ENCODE measurements at regions of chr20 and their contacts with region 1.

Region 1: DNA sequence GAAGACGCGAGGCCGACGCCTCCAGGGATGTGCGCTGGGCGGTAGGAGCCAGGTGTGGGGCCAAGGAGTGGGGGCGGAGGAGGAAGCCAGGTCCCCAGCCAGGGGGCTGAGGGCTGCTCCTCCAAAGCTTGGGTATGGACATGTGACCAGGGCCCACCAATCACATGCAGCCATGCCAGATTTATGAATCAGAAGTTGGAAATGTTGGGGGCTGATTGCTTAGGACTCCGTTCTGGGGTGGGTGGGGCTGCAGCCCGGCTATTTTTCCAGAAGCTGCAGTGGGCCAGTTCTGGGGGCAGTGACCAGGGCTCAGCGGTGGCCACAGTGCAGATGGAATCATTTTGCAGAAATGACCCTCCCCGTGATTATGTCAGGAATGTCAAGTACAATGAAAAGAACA is 96.0 kb downstream of the CEBPB start:
- DNase-seq: peak; percentile 90 to 91
- H3K4me3 ChIP-seq: peak overlapping the region; percentile 47; the same call in 1 of the 2 replicates
- H3K27ac ChIP-seq: peak overlapping the region; percentile 90
- H3K4me1 ChIP-seq: peaks cover 70% of the 10 kb centered on the region
- H3K27me3 ChIP-seq: no peaks in the 10 kb centered on the region
- CTCF ChIP-seq: 0 out of 2 replicates have a peak, but pooled peaks have one; percentile 5

Region 2: DNA sequence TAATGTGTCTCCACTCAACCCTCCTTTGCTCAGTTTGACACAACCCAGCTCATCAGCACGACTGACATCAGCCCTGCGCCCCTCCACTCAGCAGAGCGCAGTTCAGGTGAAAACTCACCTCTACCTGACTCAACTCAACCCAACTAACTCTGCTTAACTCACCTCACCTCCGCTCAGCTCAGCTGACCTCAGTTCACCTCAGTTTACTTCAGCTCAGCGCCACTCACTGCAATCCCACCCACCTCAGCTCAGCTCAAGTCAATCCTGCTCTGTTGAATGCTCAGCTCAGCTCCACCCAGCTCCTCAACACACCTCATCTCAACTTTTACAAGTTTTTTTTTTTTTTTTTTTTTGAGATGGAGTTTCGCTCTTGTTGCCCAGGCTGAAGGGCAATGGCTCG is 56.4 kb before region 1 on chr20:
- CTCF ChIA-PET with region 1: interaction called, 11 read pairs
- POLR2A ChIA-PET with region 1: interaction called, 3 read pairs
- intact Hi-C with region 1: no loop called
- DNase-seq: no peak
- H3K4me3 ChIP-seq: no peak overlapping the region
- H3K27ac ChIP-seq: no peak overlapping the region
- H3K4me1 ChIP-seq: peaks cover 48% of the 10 kb centered on the region
- H3K27me3 ChIP-seq: no peaks in the 10 kb centered on the region
- CTCF ChIP-seq: no peak

Region 3: GRCh38 chr20:50267041-50267865 is 19.4 kb before region 1 on chr20:
- CTCF ChIA-PET with region 1: interaction called, 13 read pairs
- POLR2A ChIA-PET with region 1: no interaction called
- intact Hi-C with region 1: loop called (anchors 2 kb)
- DNase-seq: peak; percentile 90 to 93
- H3K4me3 ChIP-seq: no peak overlapping the region; the same call in 1 of the 2 replicates
- H3K27ac ChIP-seq: peak overlapping the region; percentile 84
- H3K4me1 ChIP-seq: peaks cover 45% of the 10 kb centered on the region
- H3K27me3 ChIP-seq: no peaks in the 10 kb centered on the region
- CTCF ChIP-seq: peak; percentile 52; the same call in 1 of the 2 replicates

Region 4: GRCh38 chr20:50338479-50339391 is 52.1 kb after region 1 on chr20:
- CTCF ChIA-PET with region 1: no interaction called
- POLR2A ChIA-PET with region 1: no interaction called
- intact Hi-C with region 1: no loop called
- DNase-seq: no peak
- H3K4me3 ChIP-seq: no peak overlapping the region
- H3K27ac ChIP-seq: 0 out of 2 replicates have a peak overlapping the region, but pooled peaks have one; percentile 11
- H3K4me1 ChIP-seq: peaks cover 37% of the 10 kb centered on the region
- H3K27me3 ChIP-seq: no peaks in the 10 kb centered on the region
- CTCF ChIP-seq: no peak

Region 5: GRCh38 chr20:50569864-50570836 is 283.5 kb after region 1 on chr20:
- CTCF ChIA-PET with region 1: no interaction called
- POLR2A ChIA-PET with region 1: no interaction called
- intact Hi-C with region 1: no loop called
- DNase-seq: peak in 1 of 2 experiments; percentile 20
- H3K4me3 ChIP-seq: no peak overlapping the region
- H3K27ac ChIP-seq: no peak overlapping the region
- H3K4me1 ChIP-seq: no peaks in the 10 kb centered on the region
- H3K27me3 ChIP-seq: no peaks in the 10 kb centered on the region
- CTCF ChIP-seq: peak; percentile 41; the same call in 1 of the 2 replicates